MCF 10A (cell line): ENCODE measurements at regions of chr3 and their contacts with region 1.

Region 1: DNA sequence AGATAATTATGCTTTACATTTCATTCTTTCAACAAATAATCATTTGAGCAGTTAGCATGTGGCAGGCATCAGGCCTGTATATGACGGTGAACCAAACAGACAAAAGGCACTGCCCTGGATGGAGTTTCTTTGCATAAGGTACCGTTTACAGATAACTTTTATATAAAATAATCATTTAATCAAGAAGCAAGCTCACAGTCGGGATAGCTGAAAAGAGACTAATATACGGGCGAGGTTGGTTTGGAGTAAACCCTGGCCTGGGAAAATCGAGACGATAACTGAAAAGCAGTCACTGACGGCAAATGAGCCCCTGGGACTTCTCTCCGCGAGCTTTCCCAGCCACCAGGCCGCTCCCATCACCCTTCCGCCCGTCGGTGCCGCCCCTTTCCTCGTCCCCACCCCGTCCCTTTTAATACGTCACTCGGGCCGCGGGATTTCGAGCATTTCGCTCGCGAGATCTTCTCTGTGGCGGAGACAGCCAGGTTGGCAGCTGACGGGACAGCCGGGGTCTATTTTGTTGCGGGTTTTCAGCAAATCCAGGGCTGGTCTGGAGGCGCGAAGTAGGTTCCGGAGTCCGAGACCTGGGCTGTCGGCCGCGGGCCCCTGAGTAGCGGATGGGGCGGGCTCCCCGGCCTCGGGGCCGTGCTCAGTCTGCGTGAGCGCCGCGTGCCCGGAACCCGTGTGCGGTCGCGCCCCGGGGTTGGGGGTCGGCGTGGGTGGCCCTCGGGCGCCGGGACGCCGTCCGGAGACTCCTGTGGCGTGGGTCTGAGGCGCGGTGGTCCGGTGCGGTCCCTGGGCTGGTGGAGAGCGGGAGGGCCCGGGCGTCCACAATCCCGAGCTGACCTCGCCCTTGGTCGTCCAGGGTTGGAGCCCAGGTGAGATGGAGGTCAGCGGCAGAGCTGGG is at the start of gene NMD3:
- DNase-seq: peak; percentile 95
- H3K4me3 Mint-ChIP-seq: peak within 1 kb of the TSS; percentile 79
- H3K27ac Mint-ChIP-seq: peak within 1 kb of the TSS; percentile 92
- H3K4me1 Mint-ChIP-seq: peaks cover 6% of the 10 kb centered on the region
- H3K27me3 Mint-ChIP-seq: no peaks in the 10 kb centered on the region
- CTCF ChIP-seq: no peak
- total RNA-seq, gene NMD3: 84.6 and 89.6 TPM in 2 replicates

Region 2: DNA sequence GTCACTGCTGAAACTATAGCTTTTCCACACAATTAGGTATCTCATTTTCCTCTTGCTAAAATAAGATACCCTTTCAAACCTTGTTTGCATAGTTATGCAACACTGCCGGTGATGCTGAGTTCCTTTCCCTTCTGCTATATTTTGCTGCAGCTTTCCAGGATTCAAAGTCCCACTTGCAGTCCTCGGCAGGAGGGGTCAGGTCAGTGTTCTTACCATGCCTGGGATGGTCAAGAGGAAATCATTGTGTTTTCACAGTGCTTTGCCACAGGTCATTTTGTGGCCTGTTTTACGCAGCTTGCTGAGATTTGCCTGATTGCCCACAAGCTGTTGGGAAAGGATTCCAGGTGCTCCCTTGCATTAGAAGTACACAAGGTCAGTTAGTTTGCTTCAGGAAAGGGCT is 272.8 kb before region 1 on chr3:
- CTCF ChIA-PET with region 1: no interaction called
- POLR2A ChIA-PET with region 1: no interaction called
- intact Hi-C with region 1: loop called (anchors 5 kb)
- DNase-seq: no peak
- H3K4me3 Mint-ChIP-seq: no peak overlapping the region
- H3K27ac Mint-ChIP-seq: no peak overlapping the region
- H3K4me1 Mint-ChIP-seq: no peaks in the 10 kb centered on the region
- H3K27me3 Mint-ChIP-seq: no peaks in the 10 kb centered on the region
- CTCF ChIP-seq: no peak

Region 3: GRCh38 chr3:161096771-161097355 is 124.2 kb before region 1 on chr3:
- CTCF ChIA-PET with region 1: no interaction called
- POLR2A ChIA-PET with region 1: interaction called, 5 read pairs
- intact Hi-C with region 1: loop called (anchors 2 kb)
- DNase-seq: peak; percentile 42
- H3K4me3 Mint-ChIP-seq: no peak overlapping the region
- H3K27ac Mint-ChIP-seq: no peak overlapping the region
- H3K4me1 Mint-ChIP-seq: no peaks in the 10 kb centered on the region
- H3K27me3 Mint-ChIP-seq: no peaks in the 10 kb centered on the region
- CTCF ChIP-seq: peak; percentile 41

Region 4: GRCh38 chr3:161163297-161163696 is 57.8 kb before region 1 on chr3:
- CTCF ChIA-PET with region 1: no interaction called
- POLR2A ChIA-PET with region 1: no interaction called
- intact Hi-C with region 1: loop called (anchors 2 kb)
- DNase-seq: peak; percentile 73
- H3K4me3 Mint-ChIP-seq: no peak overlapping the region
- H3K27ac Mint-ChIP-seq: no peak overlapping the region
- H3K4me1 Mint-ChIP-seq: no peaks in the 10 kb centered on the region
- H3K27me3 Mint-ChIP-seq: no peaks in the 10 kb centered on the region
- CTCF ChIP-seq: no peak

Region 5: DNA sequence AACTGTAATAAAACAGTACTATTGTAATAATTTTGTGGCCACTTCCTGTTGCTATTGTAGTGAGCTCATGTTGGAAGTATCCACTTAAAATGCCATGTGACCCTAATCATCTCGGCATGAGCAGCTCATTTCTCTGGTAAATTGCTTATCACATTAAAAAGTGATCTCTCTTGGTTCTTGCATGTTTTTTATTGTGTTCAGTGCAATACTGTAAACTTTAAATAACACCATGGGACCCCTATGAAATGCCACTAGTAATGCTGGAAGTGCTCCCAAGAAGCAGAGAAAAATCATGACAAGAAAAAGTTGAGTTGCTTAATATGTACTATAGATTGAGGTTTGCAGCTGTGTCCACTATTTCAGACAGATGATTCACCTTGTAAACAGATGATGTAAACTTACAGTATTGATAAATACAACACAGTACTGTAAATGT is 45.6 kb after region 1 on chr3:
- CTCF ChIA-PET with region 1: no interaction called
- POLR2A ChIA-PET with region 1: no interaction called
- intact Hi-C with region 1: loop called (anchors 5 kb)
- DNase-seq: peak; percentile 49
- H3K4me3 Mint-ChIP-seq: no peak overlapping the region
- H3K27ac Mint-ChIP-seq: no peak overlapping the region
- H3K4me1 Mint-ChIP-seq: peaks cover 19% of the 10 kb centered on the region
- H3K27me3 Mint-ChIP-seq: no peaks in the 10 kb centered on the region
- CTCF ChIP-seq: no peak

Region 6: GRCh38 chr3:161430307-161430706 is 209.2 kb after region 1 on chr3:
- CTCF ChIA-PET with region 1: no interaction called
- POLR2A ChIA-PET with region 1: no interaction called
- intact Hi-C with region 1: no loop called
- DNase-seq: no peak
- H3K4me3 Mint-ChIP-seq: no peak overlapping the region
- H3K27ac Mint-ChIP-seq: no peak overlapping the region
- H3K4me1 Mint-ChIP-seq: no peaks in the 10 kb centered on the region
- H3K27me3 Mint-ChIP-seq: no peaks in the 10 kb centered on the region
- CTCF ChIP-seq: no peak